Gastrocnemius medialis (tissue), 4 donors: ENCODE measurements at regions of chr2 and their contacts with region 1.

Region 1: GRCh38 chr2:28392297-28393113 is at the start of gene FOSL2:
- DNase-seq: peak; percentile 98 to 99
- ATAC-seq: peak; percentile 49 to 52
- H3K4me3 ChIP-seq: peak within 1 kb of the TSS; percentile 76 to 97 (median 88)
- H3K27ac ChIP-seq: peak within 1 kb of the TSS; percentile 98 to 100 (median 99)
- H3K4me1 ChIP-seq: peaks cover 15 to 17% of the 10 kb centered on the region in 2 donors
- H3K27me3 ChIP-seq: no peaks in the 10 kb centered on the region
- CTCF ChIP-seq: peak in 1 of 5 experiments; percentile 13
- POLR2A ChIP-seq: peak; percentile 99
- total RNA-seq, gene FOSL2: 193 to 214 (median 210) TPM

Region 2: GRCh38 chr2:27771548-27772335 is 620.8 kb before region 1 on chr2 and contains the start of gene MRPL33:
- in situ Hi-C with region 1: no loop called
- intact Hi-C with region 1: loop called (anchors 10 kb)
- DNase-seq: peak; percentile 92 to 94
- ATAC-seq: peak; percentile 91 to 94
- H3K4me3 ChIP-seq: peak within 1 kb of the TSS; percentile 66 to 98 (median 84)
- H3K27ac ChIP-seq: peak within 1 kb of the TSS; percentile 87 to 99 (median 92)
- H3K4me1 ChIP-seq: peaks cover 40 to 41% of the 10 kb centered on the region in 2 donors
- H3K27me3 ChIP-seq: no peaks in the 10 kb centered on the region
- CTCF ChIP-seq: peak in 2 of 5 experiments; percentile 7 to 9
- POLR2A ChIP-seq: peak; percentile 87 to 89
- total RNA-seq, gene MRPL33: 231 to 500 (median 388) TPM

Region 3: GRCh38 chr2:27914041-27914804 is 478.3 kb before region 1 on chr2:
- in situ Hi-C with region 1: no loop called
- intact Hi-C with region 1: loop called (anchors 2 kb)
- DNase-seq: no peak
- ATAC-seq: peak in 1 of 2 donors; percentile 20
- H3K4me3 ChIP-seq: no peak overlapping the region
- H3K27ac ChIP-seq: peak overlapping the region; percentile 78 to 93 (median 88)
- H3K4me1 ChIP-seq: peaks cover 58 to 65% of the 10 kb centered on the region in 2 donors
- H3K27me3 ChIP-seq: no peaks in the 10 kb centered on the region
- CTCF ChIP-seq: no peak
- POLR2A ChIP-seq: no peak

Region 4: DNA sequence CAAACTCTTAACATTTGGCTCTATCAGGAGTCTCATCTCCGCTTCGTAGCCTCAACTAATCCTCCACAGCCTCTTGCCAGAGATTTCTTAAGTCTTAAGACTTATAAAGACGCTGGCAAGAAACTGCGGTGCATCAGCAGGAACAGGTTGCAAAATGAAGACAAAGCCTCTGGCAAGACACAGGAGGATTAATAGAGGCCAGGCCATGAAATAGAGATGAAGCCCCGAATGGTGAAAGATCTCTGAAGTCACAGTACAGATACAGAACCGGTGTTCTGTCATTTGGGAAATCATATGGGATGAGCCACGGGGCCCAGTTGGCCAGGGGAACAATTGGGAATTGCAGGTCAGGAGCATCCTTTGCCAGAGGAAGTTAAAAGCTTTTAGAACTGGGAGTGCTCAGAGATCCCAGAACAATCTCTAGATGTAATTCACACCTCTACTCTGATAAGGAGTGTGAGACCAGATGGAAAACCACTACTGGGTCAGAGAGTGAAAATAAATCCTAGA is 190.8 kb before region 1 on chr2:
- in situ Hi-C with region 1: no loop called
- intact Hi-C with region 1: loop called (anchors 1 kb)
- DNase-seq: peak; percentile 85 to 93
- ATAC-seq: peak; percentile 92 to 94
- H3K4me3 ChIP-seq: no peak overlapping the region
- H3K27ac ChIP-seq: peak overlapping the region; percentile 75 to 87 (median 82)
- H3K4me1 ChIP-seq: peaks cover 25 to 38% of the 10 kb centered on the region in 2 donors
- H3K27me3 ChIP-seq: no peaks in the 10 kb centered on the region
- CTCF ChIP-seq: no peak
- POLR2A ChIP-seq: peak; percentile 47 to 64

Region 5: GRCh38 chr2:28333606-28334526 is 58.6 kb before region 1 on chr2:
- in situ Hi-C with region 1: no loop called
- intact Hi-C with region 1: loop called (anchors 2 kb)
- DNase-seq: peak; percentile 81 to 90
- ATAC-seq: peak; percentile 79 to 82
- H3K4me3 ChIP-seq: peak overlapping the region in 1 of 4 donors; percentile 2
- H3K27ac ChIP-seq: peak overlapping the region; percentile 94 to 97 (median 96)
- H3K4me1 ChIP-seq: peaks cover 65% of the 10 kb centered on the region in 2 donors
- H3K27me3 ChIP-seq: no peaks in the 10 kb centered on the region
- CTCF ChIP-seq: no peak
- POLR2A ChIP-seq: peak; percentile 35 to 63

Region 6: GRCh38 chr2:28356095-28356911 is 36.2 kb before region 1 on chr2:
- in situ Hi-C with region 1: no loop called
- intact Hi-C with region 1: loop called (anchors 1 kb)
- DNase-seq: peak; percentile 71 to 90
- ATAC-seq: peak; percentile 75 to 83
- H3K4me3 ChIP-seq: no peak overlapping the region
- H3K27ac ChIP-seq: peak overlapping the region; percentile 82 to 93 (median 88)
- H3K4me1 ChIP-seq: peaks cover 16 to 19% of the 10 kb centered on the region in 2 donors
- H3K27me3 ChIP-seq: no peaks in the 10 kb centered on the region
- CTCF ChIP-seq: no peak
- POLR2A ChIP-seq: peak in 1 of 2 donors; percentile 23

Region 7: DNA sequence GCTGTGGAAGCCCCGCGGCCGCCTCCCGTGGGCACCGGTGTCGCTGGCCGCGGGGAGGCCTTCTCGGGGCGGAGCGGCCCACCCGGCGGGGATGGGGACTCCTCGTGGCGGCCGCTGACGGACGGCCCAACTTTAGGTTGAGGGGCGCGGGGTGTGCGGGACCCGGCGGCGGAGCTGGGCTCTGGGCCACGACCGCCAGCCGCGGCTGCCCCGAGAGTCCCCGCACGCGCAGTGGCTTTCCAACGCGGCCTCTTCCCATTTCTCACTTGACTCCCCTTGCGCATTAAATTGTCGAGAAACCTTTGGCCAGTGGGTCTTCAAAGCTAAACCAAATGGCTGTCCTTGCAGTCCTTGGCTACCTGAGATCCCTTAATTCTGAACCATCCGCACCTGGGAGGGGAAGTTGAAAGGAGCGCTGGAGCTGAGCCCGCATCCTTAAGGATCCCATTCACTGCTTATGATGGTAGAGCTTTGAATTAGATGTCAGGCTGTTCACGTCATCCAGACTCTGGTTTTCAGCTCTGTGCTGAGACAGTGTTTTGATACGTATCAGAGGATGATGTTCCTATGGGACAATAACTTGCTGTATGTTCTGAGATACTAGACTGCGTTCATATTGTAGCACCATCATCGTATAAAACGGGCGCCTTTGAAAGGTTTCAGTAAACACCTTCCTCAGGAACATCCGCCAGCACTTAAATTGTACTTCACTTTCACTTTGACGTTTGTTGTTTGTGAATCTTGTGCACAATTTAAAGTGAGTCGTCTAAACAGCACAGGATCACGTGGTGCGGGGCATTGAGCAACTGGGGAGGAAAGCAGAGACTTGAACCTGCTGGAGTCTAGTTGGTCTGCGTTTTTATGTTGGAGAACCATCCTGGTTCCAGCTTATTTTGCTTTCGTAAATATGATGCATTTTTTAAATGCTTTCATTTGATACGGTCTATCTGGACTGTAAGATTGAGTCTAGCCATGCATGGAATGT is 723.6 kb after region 1 on chr2:
- in situ Hi-C with region 1: no loop called
- intact Hi-C with region 1: loop called (anchors 10 kb)
- DNase-seq: peak; percentile 77 to 79
- ATAC-seq: peak; percentile 47 to 49
- H3K4me3 ChIP-seq: peak overlapping the region; percentile 63 to 75 (median 70)
- H3K27ac ChIP-seq: peak overlapping the region; percentile 85 to 94 (median 93)
- H3K4me1 ChIP-seq: peaks cover 42 to 58% of the 10 kb centered on the region in 2 donors
- H3K27me3 ChIP-seq: no peaks in the 10 kb centered on the region
- CTCF ChIP-seq: no peak
- POLR2A ChIP-seq: peak; percentile 51 to 69